ENCODE measurements at regions of chr3 and their contacts with region 1.

Region 1: GRCh38 chr3:46078712-46079400 is 51.6 kb upstream of the XCR1 start:
- DNase-seq: peak; percentile 80
- H3K4me3 ChIP-seq: no peak overlapping the region
- CTCF ChIP-seq: peak; percentile 91

Region 2: GRCh38 chr3:45760878-45761711 is 317.8 kb before region 1 on chr3:
- CTCF ChIA-PET with region 1: interaction called, 105 read pairs
- POLR2A ChIA-PET with region 1: no interaction called
- DNase-seq: peak; percentile 3
- H3K4me3 ChIP-seq: no peak overlapping the region
- CTCF ChIP-seq: peak; percentile 90

Region 3: DNA sequence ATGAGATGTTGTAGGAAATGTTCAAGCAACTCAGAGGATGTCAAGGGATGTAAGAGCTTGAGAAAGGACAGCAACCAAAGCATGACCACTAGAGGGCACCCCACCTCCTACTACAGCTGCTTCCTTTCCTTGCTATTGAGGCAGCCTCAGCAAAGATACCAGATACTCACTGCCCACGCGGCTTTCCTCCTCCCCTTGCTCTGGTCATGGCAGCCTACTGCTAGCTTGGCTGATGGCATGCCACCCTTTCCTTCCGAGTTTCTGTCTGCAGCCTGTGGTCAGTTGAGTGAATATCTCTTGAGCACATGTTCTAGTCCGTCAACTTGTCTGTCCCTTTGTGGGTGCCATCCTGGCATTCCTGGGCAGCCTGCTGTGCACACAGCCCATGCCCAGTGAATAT is 140.0 kb before region 1 on chr3:
- CTCF ChIA-PET with region 1: interaction called, 918 read pairs
- POLR2A ChIA-PET with region 1: no interaction called
- DNase-seq: peak; percentile 69
- H3K4me3 ChIP-seq: no peak overlapping the region
- CTCF ChIP-seq: peak; percentile 93

Region 4: GRCh38 chr3:45986303-45986982 is 92.4 kb before region 1 on chr3:
- CTCF ChIA-PET with region 1: interaction called, 17 read pairs
- POLR2A ChIA-PET with region 1: no interaction called
- DNase-seq: no peak
- H3K4me3 ChIP-seq: no peak overlapping the region
- CTCF ChIP-seq: no peak

Region 5: GRCh38 chr3:46065294-46065721 is 13.5 kb before region 1 on chr3:
- CTCF ChIA-PET with region 1: interaction called, 118 read pairs
- POLR2A ChIA-PET with region 1: no interaction called
- DNase-seq: no peak
- H3K4me3 ChIP-seq: no peak overlapping the region
- CTCF ChIP-seq: no peak

Region 6: GRCh38 chr3:46143951-46144473 is 65.2 kb after region 1 on chr3:
- CTCF ChIA-PET with region 1: no interaction called
- POLR2A ChIA-PET with region 1: no interaction called
- DNase-seq: no peak
- H3K4me3 ChIP-seq: no peak overlapping the region
- CTCF ChIP-seq: no peak

Region 7: DNA sequence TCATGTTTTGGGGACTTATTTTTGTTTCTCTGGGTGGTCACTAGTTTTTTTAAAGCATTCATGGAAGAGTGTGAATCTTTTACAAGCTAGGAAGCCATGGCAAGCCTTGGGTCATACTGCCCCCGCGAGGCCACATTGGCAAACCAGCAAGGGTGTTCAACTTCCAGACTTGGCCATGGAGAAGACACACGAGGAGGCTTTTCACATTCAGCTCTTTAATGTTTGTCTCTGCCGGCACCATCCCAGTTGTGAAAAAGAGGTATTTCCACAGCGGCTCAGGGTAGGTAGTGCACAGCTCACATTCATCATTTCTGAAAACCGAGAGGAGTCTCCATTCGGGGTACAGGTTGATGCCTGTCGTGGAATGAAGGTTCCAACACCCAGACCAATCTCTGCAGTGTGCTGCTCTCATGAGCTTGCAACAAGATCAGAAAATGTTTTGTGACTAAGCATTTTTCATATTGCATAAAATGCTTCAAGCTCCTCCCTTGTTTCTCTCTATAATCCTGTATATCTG is 299.6 kb after region 1 on chr3:
- CTCF ChIA-PET with region 1: interaction called, 15 read pairs
- POLR2A ChIA-PET with region 1: no interaction called
- DNase-seq: no peak
- H3K4me3 ChIP-seq: no peak overlapping the region
- CTCF ChIP-seq: peak; percentile 70

Measured in AG04449 (cell line).